Heart left ventricle (tissue), 16 donors: ENCODE measurements at regions of chr3 and their contacts with region 1.

Region 1: GRCh38 chr3:96959901-96960641 is 145.7 kb downstream of the EPHA6 start:
- DNase-seq: no peak
- ATAC-seq: no peak
- H3K4me3 ChIP-seq: no peak overlapping the region
- H3K27ac ChIP-seq: no peak overlapping the region
- H3K4me1 ChIP-seq: no peaks in the 10 kb centered on the region
- H3K27me3 ChIP-seq: no peaks in the 10 kb centered on the region
- CTCF ChIP-seq: no peak
- POLR2A ChIP-seq: no peak

Region 2: GRCh38 chr3:96991800-96992365 is 31.8 kb after region 1 on chr3:
- intact Hi-C with region 1: loop called in 1 of 10 experiments (anchors 2 kb)
- DNase-seq: no peak
- ATAC-seq: peak in 1 of 4 donors; percentile 50
- H3K4me3 ChIP-seq: no peak overlapping the region
- H3K27ac ChIP-seq: peak overlapping the region in 1 of 12 donors; percentile 37
- H3K4me1 ChIP-seq: no peaks in the 10 kb centered on the region
- H3K27me3 ChIP-seq: no peaks in the 10 kb centered on the region
- CTCF ChIP-seq: no peak
- POLR2A ChIP-seq: no peak